ENCODE measurements at regions of chr14 and their contacts with region 1.

Region 1: GRCh38 chr14:100654814-100655740 is 67.9 kb upstream of the BEGAIN start:
- DNase-seq: peak in 13 of 14 experiments; percentile 24 to 76 (median 42)
- ATAC-seq: peak; percentile 67
- H3K4me3 ChIP-seq: no peak overlapping the region
- H3K4me3 Mint-ChIP-seq: no peak overlapping the region
- H3K27ac ChIP-seq: no peak overlapping the region
- H3K27ac Mint-ChIP-seq: no peak overlapping the region
- H3K4me1 ChIP-seq: peaks cover 25% of the 10 kb centered on the region
- H3K4me1 Mint-ChIP-seq: peaks cover 5% of the 10 kb centered on the region
- H3K27me3 ChIP-seq: peaks cover 17 to 22% of the 10 kb centered on the region in 2 experiments
- H3K27me3 Mint-ChIP-seq: peaks cover 26% of the 10 kb centered on the region
- CTCF ChIP-seq: peak; percentile 73

Region 2: GRCh38 chr14:100383727-100384158 is 271.3 kb before region 1 on chr14:
- CTCF ChIA-PET with region 1: interaction called, 16 read pairs
- POLR2A ChIA-PET with region 1: no interaction called
- intact Hi-C with region 1: loop called (anchors 1 to 2 kb)
- DNase-seq: peak; percentile 42 to 84 (median 56)
- ATAC-seq: peak; percentile 88
- H3K4me3 ChIP-seq: no peak overlapping the region
- H3K4me3 Mint-ChIP-seq: no peak overlapping the region
- H3K27ac ChIP-seq: no peak overlapping the region
- H3K27ac Mint-ChIP-seq: no peak overlapping the region
- H3K4me1 ChIP-seq: peaks cover 15% of the 10 kb centered on the region
- H3K4me1 Mint-ChIP-seq: peaks cover 19% of the 10 kb centered on the region
- H3K27me3 ChIP-seq: no peaks in the 10 kb centered on the region
- H3K27me3 Mint-ChIP-seq: no peaks in the 10 kb centered on the region
- CTCF ChIP-seq: peak; percentile 78

Region 3: DNA sequence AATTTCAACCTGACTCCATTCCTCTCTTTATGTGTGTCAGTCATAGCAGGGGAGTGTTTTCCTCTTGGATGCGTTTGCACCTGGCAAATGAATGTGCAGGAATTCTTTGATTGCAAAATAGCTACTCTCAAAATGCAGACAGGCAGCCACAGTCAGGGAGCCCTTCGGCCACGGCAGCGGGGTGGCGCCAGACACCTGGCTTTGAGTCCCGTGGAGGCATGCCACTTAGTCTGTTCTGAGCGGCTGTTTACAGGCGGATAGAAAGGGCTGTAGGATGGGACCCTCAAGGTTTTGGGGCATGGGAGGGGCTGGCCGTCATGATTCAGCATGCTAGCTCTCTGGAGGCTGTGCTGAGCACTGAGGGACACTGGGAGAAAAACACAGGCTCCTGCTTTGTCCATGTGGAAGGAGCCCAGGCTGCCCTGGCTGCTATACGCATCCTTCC is 214.9 kb before region 1 on chr14:
- CTCF ChIA-PET with region 1: no interaction called
- POLR2A ChIA-PET with region 1: no interaction called
- intact Hi-C with region 1: loop called (anchors 1 to 2 kb)
- DNase-seq: peak in 10 of 14 experiments; percentile 9 to 70 (median 27)
- ATAC-seq: no peak
- H3K4me3 ChIP-seq: no peak overlapping the region
- H3K4me3 Mint-ChIP-seq: no peak overlapping the region
- H3K27ac ChIP-seq: no peak overlapping the region
- H3K27ac Mint-ChIP-seq: no peak overlapping the region
- H3K4me1 ChIP-seq: peaks cover 3% of the 10 kb centered on the region
- H3K4me1 Mint-ChIP-seq: peaks cover 17% of the 10 kb centered on the region
- H3K27me3 ChIP-seq: no peaks in the 10 kb centered on the region
- H3K27me3 Mint-ChIP-seq: no peaks in the 10 kb centered on the region
- CTCF ChIP-seq: peak; percentile 19

Region 4: DNA sequence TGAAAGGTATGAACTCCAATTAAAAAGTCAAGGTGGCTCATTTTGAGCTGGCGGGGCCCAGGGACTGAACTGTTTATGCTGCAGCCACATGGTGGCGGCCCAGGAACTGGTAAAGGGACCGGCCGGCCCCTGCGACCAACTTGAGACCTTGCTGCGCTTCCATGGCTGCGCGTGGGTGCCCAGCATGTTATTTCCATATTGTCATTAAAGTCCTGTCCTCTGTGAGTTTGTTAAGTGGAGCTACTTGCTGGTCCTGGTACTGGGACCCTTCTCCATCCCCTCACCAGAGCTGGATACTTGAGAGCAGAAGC is 130.2 kb before region 1 on chr14:
- CTCF ChIA-PET with region 1: interaction called, 3 read pairs
- POLR2A ChIA-PET with region 1: interaction called, 3 read pairs
- intact Hi-C with region 1: loop called in 1 of 2 experiments (anchors 2 kb)
- DNase-seq: peak in 5 of 14 experiments; percentile 12 to 59 (median 27)
- ATAC-seq: no peak
- H3K4me3 ChIP-seq: no peak overlapping the region
- H3K4me3 Mint-ChIP-seq: no peak overlapping the region
- H3K27ac ChIP-seq: no peak overlapping the region
- H3K27ac Mint-ChIP-seq: no peak overlapping the region
- H3K4me1 ChIP-seq: no peaks in the 10 kb centered on the region
- H3K4me1 Mint-ChIP-seq: no peaks in the 10 kb centered on the region
- H3K27me3 ChIP-seq: no peaks in the 10 kb centered on the region
- H3K27me3 Mint-ChIP-seq: no peaks in the 10 kb centered on the region
- CTCF ChIP-seq: peak; percentile 55

Measured in CD4-positive, alpha-beta T cell (primary cell).